ENCODE measurements at regions of chr19 and their contacts with region 1.

Region 1: GRCh38 chr19:17496337-17496997 is 15.0 kb upstream of the PGLS start:
- DNase-seq: no peak
- H3K4me3 ChIP-seq: no peak overlapping the region
- H3K27ac ChIP-seq: no peak overlapping the region
- H3K27me3 ChIP-seq: no peaks in the 10 kb centered on the region
- CTCF ChIP-seq: peak; percentile 88

Region 2: GRCh38 chr19:17419621-17420466 is 76.6 kb before region 1 on chr19 and contains the start of gene MVB12A:
- CTCF ChIA-PET with region 1: no interaction called
- POLR2A ChIA-PET with region 1: no interaction called
- DNase-seq: peak; percentile 99
- H3K4me3 ChIP-seq: peak within 1 kb of the TSS; percentile 85
- H3K27ac ChIP-seq: peak within 1 kb of the TSS; percentile 78
- H3K27me3 ChIP-seq: peaks cover 2% of the 10 kb centered on the region
- CTCF ChIP-seq: no peak
- polyA plus RNA-seq, gene MVB12A: 22.5 and 30.1 TPM in 2 replicates

Region 3: GRCh38 chr19:17511724-17512573 is 15.5 kb after region 1 on chr19:
- CTCF ChIA-PET with region 1: interaction called, 16 read pairs
- POLR2A ChIA-PET with region 1: interaction called, 3 read pairs
- DNase-seq: peak; percentile 43
- H3K4me3 ChIP-seq: peak overlapping the region; percentile 86
- H3K27ac ChIP-seq: peak overlapping the region; percentile 77
- H3K27me3 ChIP-seq: no peaks in the 10 kb centered on the region
- CTCF ChIP-seq: no peak

Region 4: DNA sequence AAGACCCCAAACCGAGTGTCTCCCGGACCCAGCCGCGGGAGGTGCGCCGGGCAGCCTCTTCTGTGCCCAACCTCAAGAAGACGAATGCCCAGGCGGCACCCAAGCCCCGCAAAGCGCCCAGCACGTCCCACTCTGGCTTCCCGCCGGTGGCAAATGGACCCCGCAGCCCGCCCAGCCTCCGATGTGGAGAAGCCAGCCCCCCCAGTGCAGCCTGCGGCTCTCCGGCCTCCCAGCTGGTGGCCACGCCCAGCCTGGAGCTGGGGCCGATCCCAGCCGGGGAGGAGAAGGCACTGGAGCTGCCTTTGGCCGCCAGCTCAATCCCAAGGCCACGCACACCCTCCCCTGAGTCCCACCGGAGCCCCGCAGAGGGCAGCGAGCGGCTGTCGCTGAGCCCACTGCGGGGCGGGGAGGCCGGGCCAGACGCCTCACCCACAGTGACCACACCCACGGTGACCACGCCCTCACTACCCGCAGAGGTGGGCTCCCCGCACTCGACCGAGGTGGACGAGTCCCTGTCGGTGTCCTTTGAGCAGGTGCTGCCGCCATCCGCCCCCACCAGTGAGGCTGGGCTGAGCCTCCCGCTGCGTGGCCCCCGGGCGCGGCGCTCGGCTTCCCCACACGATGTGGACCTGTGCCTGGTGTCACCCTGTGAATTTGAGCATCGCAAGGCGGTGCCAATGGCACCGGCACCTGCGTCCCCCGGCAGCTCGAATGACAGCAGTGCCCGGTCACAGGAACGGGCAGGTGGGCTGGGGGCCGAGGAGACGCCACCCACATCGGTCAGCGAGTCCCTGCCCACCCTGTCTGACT is 230.7 kb after region 1 on chr19:
- CTCF ChIA-PET with region 1: no interaction called
- POLR2A ChIA-PET with region 1: no interaction called
- DNase-seq: no peak
- H3K4me3 ChIP-seq: no peak overlapping the region
- H3K27ac ChIP-seq: no peak overlapping the region
- H3K27me3 ChIP-seq: no peaks in the 10 kb centered on the region
- CTCF ChIP-seq: no peak